CD4-positive, alpha-beta memory T cell (primary cell): ENCODE measurements at regions of chr5 and their contacts with region 1.

Region 1: GRCh38 chr5:39376293-39376714 is 12.0 kb upstream of the C9 start:
- DNase-seq: peak; percentile 30 to 46 (median 34)
- H3K4me3 ChIP-seq: no peak overlapping the region
- H3K4me3 Mint-ChIP-seq: no peak overlapping the region
- H3K27ac ChIP-seq: no peak overlapping the region
- H3K27ac Mint-ChIP-seq: no peak overlapping the region
- H3K4me1 ChIP-seq: no peaks in the 10 kb centered on the region
- H3K4me1 Mint-ChIP-seq: peaks cover 0 to 8% (median 4%) of the 10 kb centered on the region in 4 donors
- H3K27me3 ChIP-seq: no peaks in the 10 kb centered on the region
- H3K27me3 Mint-ChIP-seq: peaks cover 6 to 15% of the 10 kb centered on the region in 2 donors

Region 2: GRCh38 chr5:38854907-38855306 is 521.4 kb before region 1 on chr5:
- CTCF ChIA-PET with region 1: no interaction called
- POLR2A ChIA-PET with region 1: no interaction called
- intact Hi-C with region 1: no loop called
- DNase-seq: no peak
- H3K4me3 ChIP-seq: no peak overlapping the region
- H3K4me3 Mint-ChIP-seq: no peak overlapping the region
- H3K27ac ChIP-seq: no peak overlapping the region
- H3K27ac Mint-ChIP-seq: no peak overlapping the region
- H3K4me1 ChIP-seq: no peaks in the 10 kb centered on the region
- H3K4me1 Mint-ChIP-seq: no peaks in the 10 kb centered on the region
- H3K27me3 ChIP-seq: no peaks in the 10 kb centered on the region
- H3K27me3 Mint-ChIP-seq: peaks cover 9 to 23% of the 10 kb centered on the region in 2 donors

Region 3: DNA sequence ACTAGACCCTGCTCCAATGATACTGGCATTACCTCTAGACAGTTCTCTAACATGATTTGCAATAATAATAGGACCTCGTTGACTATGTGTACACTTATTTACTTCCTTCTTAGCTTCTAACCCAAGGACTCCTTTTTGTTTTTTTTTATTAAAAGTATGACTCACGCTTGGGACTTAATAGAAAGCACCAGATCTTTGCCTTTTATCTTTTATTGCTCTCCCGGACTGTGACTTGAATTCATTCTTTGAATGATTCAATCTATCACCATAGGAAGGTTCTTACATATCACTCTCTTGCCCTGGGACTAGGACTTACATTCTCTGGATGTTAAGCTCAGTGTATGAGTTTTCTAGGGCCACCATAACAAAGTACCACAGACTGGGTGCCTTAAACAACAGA is 21.0 kb before region 1 on chr5:
- CTCF ChIA-PET with region 1: interaction called, 12 read pairs
- POLR2A ChIA-PET with region 1: no interaction called
- intact Hi-C with region 1: no loop called
- DNase-seq: no peak
- H3K4me3 ChIP-seq: no peak overlapping the region
- H3K4me3 Mint-ChIP-seq: no peak overlapping the region
- H3K27ac ChIP-seq: no peak overlapping the region
- H3K27ac Mint-ChIP-seq: no peak overlapping the region
- H3K4me1 ChIP-seq: no peaks in the 10 kb centered on the region
- H3K4me1 Mint-ChIP-seq: peaks cover 0 to under 1% (median 0%) of the 10 kb centered on the region in 4 donors
- H3K27me3 ChIP-seq: no peaks in the 10 kb centered on the region
- H3K27me3 Mint-ChIP-seq: no peaks in the 10 kb centered on the region

Region 4: DNA sequence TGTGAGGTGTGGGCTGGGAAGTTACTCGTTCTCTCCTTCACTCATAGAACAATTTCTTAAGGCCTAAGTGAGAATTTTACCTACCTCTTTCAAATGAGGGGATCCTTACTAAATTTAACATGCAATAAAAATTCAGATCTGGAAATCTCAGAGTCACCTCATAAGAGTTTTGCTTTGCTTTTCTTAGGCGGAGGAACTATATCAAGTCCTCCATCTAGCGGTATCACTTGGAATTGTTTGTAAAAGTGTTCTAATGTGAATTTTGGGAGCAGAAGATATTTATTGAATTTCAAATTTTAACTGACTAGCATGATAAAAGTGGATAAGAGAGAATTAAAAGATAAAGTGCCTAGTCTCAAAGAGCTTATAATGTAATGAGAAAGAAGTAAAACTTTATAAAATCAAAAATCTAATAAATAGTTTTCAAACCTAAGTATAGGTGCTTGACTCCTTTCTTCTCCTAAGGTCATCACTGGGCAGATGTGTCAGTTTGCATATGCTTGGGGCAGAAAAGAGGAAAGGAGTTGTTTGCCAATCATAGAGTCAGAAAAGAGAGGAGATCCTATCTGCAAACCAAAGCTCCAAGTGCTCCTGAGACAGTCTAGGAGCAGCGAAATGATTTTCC is 194.2 kb after region 1 on chr5:
- CTCF ChIA-PET with region 1: interaction called, 3 read pairs
- POLR2A ChIA-PET with region 1: no interaction called
- intact Hi-C with region 1: loop called (anchors 1 kb)
- DNase-seq: peak in 4 of 5 donors; percentile 11 to 22 (median 20)
- H3K4me3 ChIP-seq: no peak overlapping the region
- H3K4me3 Mint-ChIP-seq: no peak overlapping the region
- H3K27ac ChIP-seq: no peak overlapping the region
- H3K27ac Mint-ChIP-seq: no peak overlapping the region
- H3K4me1 ChIP-seq: no peaks in the 10 kb centered on the region
- H3K4me1 Mint-ChIP-seq: peaks cover 0 to 2% (median under 1%) of the 10 kb centered on the region in 4 donors
- H3K27me3 ChIP-seq: no peaks in the 10 kb centered on the region
- H3K27me3 Mint-ChIP-seq: peaks cover 1 to 13% of the 10 kb centered on the region in 2 donors